ENCODE measurements at regions of chr9 and their contacts with region 1.

Region 1: GRCh38 chr9:84697509-84698114 is 28.1 kb downstream of the NTRK2 start:
- DNase-seq: peak; percentile 43 to 83 (median 68)
- H3K4me3 ChIP-seq: no peak overlapping the region
- H3K27ac ChIP-seq: no peak overlapping the region
- H3K4me1 ChIP-seq: no peaks in the 10 kb centered on the region
- H3K27me3 ChIP-seq: no peaks in the 10 kb centered on the region
- CTCF ChIP-seq: peak; percentile 31 to 78 (median 58)
- POLR2A ChIP-seq: no peak

Region 2: DNA sequence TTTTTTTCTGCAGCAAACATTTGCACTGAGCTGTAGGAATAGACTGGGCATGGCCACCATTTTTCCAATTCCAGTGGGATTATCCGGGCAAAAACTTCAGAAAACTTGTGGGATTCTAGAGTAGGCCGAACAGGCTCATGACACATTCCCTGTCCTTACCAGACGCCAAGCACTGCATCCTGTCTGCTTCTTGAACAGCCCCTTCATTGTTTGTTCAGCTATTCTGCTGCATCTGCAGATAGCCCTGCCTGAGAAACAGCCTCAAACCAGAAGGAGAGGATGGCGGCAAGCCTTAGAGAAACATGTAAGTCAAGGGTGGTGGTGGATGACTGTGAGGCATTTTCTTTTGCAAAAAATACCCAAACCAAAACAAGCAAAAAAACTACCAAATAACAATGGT is 139.9 kb before region 1 on chr9:
- intact Hi-C with region 1: no loop called
- DNase-seq: no peak
- H3K4me3 ChIP-seq: no peak overlapping the region
- H3K27ac ChIP-seq: no peak overlapping the region
- H3K4me1 ChIP-seq: no peaks in the 10 kb centered on the region
- H3K27me3 ChIP-seq: no peaks in the 10 kb centered on the region
- CTCF ChIP-seq: no peak
- POLR2A ChIP-seq: no peak

Region 3: GRCh38 chr9:84953797-84954705 is 256.4 kb after region 1 on chr9:
- intact Hi-C with region 1: loop called in 1 of 2 experiments (anchors 5 kb)
- DNase-seq: peak; percentile 60 to 89 (median 76)
- H3K4me3 ChIP-seq: no peak overlapping the region
- H3K27ac ChIP-seq: no peak overlapping the region
- H3K4me1 ChIP-seq: no peaks in the 10 kb centered on the region
- H3K27me3 ChIP-seq: no peaks in the 10 kb centered on the region
- CTCF ChIP-seq: peak; percentile 77 to 94 (median 86)
- POLR2A ChIP-seq: no peak

Measured in adrenal gland (tissue), 19 donors.